ENCODE measurements at regions of chr6 and their contacts with region 1.

Region 1: GRCh38 chr6:3748208-3749066 is 3.1 kb downstream of the PXDC1 start:
- DNase-seq: peak; percentile 86
- H3K4me3 ChIP-seq: peak overlapping the region; percentile 69 to 70; a peak in 3 of 4 replicates
- H3K27ac ChIP-seq: peak overlapping the region in 1 of 2 experiments; percentile 89; a peak in 2 of 4 replicates
- H3K4me1 ChIP-seq: peaks cover 14 to 23% of the 10 kb centered on the region in 2 experiments; a peak in 3 of 4 replicates
- H3K27me3 ChIP-seq: no peaks in the 10 kb centered on the region
- CTCF ChIP-seq: peak; percentile 80
- EP300 ChIP-seq: no peak
- RAD21 ChIP-seq: peak; percentile 66

Region 2: DNA sequence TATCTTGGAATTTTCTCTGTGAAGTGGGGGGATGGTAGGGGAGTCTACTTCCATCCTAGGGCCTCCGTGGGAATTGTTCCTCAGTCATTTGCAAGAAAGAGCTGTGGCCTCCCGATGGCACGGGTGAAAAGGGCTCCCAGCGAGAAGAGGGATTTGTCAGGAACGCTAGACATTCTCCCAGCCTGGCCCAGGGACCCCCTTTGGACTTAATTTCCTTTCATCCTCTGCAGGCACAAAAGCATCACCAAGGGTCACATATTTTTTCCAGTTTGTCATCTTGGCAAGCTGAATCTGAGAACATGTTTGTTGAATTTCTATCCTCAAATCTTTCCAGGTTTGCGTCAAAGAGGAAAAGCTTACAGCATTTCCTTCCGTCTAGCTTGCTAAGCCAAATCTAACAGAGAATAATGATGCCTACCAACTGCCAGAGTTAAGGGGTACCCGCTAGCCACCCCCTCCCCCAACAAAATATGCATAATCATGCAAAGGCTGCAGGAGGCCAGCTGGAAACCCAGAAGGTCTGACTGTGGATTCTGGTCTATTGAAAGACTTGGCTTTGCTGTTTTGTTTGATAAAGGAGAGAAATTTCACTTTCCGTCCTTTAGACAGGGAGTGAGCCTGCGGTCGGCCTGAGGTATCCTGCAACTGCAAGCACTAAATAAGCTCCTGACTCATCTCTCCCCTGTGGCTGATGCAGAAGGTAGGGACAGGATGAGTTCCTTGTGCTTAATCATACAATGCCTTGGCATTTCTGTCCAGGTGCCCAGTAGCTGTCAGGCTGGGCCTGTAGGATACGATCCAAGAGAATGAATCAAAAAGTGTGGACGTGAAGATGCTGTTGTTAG is 466.6 kb before region 1 on chr6:
- CTCF ChIA-PET with region 1: interaction called, 11 read pairs
- POLR2A ChIA-PET with region 1: no interaction called
- DNase-seq: no peak
- H3K4me3 ChIP-seq: no peak overlapping the region
- H3K27ac ChIP-seq: no peak overlapping the region; a peak in 1 of 4 replicates
- H3K4me1 ChIP-seq: peaks cover 13 to 14% of the 10 kb centered on the region in 2 experiments; a peak in 2 of 4 replicates
- H3K27me3 ChIP-seq: no peaks in the 10 kb centered on the region
- CTCF ChIP-seq: no peak
- EP300 ChIP-seq: peak in 1 of 2 experiments; percentile 20; a peak in 1 of 4 replicates
- RAD21 ChIP-seq: no peak

Region 3: GRCh38 chr6:3813150-3813780 is 64.8 kb after region 1 on chr6:
- CTCF ChIA-PET with region 1: no interaction called
- POLR2A ChIA-PET with region 1: no interaction called
- DNase-seq: no peak
- H3K4me3 ChIP-seq: no peak overlapping the region
- H3K27ac ChIP-seq: peak overlapping the region in 1 of 2 experiments; percentile 33; a peak in 1 of 4 replicates
- H3K4me1 ChIP-seq: peaks cover 8 to 20% of the 10 kb centered on the region in 2 experiments; a peak in 3 of 4 replicates
- H3K27me3 ChIP-seq: no peaks in the 10 kb centered on the region
- CTCF ChIP-seq: no peak
- EP300 ChIP-seq: peak in 1 of 2 experiments; percentile 38; a peak in 1 of 4 replicates
- RAD21 ChIP-seq: no peak

Region 4: DNA sequence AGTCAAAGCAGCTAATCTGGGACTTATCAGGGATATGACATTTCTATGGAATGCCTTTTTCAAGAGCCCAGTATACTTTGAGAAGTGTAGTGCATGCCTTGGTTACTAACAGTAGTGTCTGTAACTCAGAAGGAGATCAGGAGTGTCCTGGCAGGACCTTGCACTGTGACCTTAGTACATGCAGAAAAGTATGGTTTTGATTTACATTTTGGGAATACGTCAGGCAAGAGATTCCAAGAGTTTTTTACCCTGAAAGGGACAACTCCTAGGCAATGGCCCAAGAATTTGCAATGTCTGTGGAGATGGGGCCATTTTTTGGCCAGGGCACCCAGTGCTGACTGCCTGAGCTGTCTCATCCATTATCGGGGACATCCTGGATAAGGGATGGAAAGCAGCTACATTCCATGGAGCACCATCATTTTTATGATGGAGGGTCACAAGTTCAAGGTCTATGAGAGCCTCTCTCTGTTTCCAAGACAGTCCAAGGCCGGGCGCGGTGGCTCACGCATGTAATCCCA is 180.9 kb after region 1 on chr6:
- CTCF ChIA-PET with region 1: interaction called, 20 read pairs
- POLR2A ChIA-PET with region 1: no interaction called
- DNase-seq: no peak
- H3K4me3 ChIP-seq: no peak overlapping the region
- H3K27ac ChIP-seq: peak overlapping the region; percentile 58 to 84; a peak in 3 of 4 replicates
- H3K4me1 ChIP-seq: peaks cover 2 to 14% of the 10 kb centered on the region in 2 experiments; a peak in 2 of 4 replicates
- H3K27me3 ChIP-seq: no peaks in the 10 kb centered on the region
- CTCF ChIP-seq: no peak
- EP300 ChIP-seq: peak in 1 of 2 experiments; percentile 87; a peak in 2 of 4 replicates
- RAD21 ChIP-seq: no peak

Region 5: DNA sequence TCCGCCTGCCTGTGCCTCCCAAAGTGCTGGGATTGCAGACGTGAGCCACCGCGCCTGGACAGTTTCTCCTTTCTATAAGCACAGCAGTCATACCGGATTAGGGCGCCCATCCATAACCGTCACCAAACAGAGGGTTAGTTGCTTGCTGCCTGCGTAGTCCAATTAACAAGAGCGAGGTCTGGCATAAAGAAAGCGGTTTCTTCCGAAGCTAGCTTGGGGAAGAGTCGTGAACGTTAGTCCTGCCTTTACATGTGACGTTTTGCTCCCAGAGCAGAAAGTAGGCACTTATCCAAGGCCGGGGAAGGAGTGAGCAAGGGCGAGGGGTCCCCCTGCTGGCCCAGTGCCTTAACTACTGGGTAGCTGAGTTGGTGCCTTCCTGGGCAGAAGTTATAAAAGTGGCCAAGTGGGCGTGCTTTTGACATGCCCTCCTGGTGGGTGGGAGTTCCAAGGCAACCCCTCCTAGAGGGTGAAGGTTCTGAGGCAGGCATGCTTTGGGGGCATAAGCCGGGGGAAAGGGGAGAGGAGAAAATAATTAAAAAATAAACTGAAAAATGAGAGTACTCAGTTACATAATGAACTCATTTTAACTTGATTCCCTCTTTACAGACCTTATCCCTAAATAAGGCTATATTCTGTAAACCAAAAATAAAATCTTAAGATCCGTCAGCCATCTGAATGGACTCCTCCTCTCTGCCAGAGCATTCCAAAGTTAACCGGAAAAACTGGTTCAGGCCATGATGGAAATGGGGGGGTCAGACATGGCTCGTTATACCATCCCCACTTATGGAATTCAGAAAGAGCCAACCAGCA is 242.5 kb after region 1 on chr6:
- CTCF ChIA-PET with region 1: interaction called, 53 read pairs
- POLR2A ChIA-PET with region 1: no interaction called
- DNase-seq: peak; percentile 82
- H3K4me3 ChIP-seq: peak overlapping the region in 1 of 2 experiments; percentile 2; a peak in 1 of 4 replicates
- H3K27ac ChIP-seq: peak overlapping the region in 1 of 2 experiments; percentile 14; a peak in 1 of 4 replicates
- H3K4me1 ChIP-seq: peaks cover 14% of the 10 kb centered on the region in 2 experiments; a peak in 2 of 4 replicates
- H3K27me3 ChIP-seq: no peaks in the 10 kb centered on the region
- CTCF ChIP-seq: peak; percentile 96
- EP300 ChIP-seq: no peak
- RAD21 ChIP-seq: peak; percentile 91

Region 6: GRCh38 chr6:4008324-4009047 is 260.0 kb after region 1 on chr6:
- CTCF ChIA-PET with region 1: interaction called, 14 read pairs
- POLR2A ChIA-PET with region 1: no interaction called
- DNase-seq: peak; percentile 49
- H3K4me3 ChIP-seq: no peak overlapping the region; a peak in 1 of 4 replicates
- H3K27ac ChIP-seq: peak overlapping the region in 1 of 2 experiments; percentile 9; a peak in 1 of 4 replicates
- H3K4me1 ChIP-seq: peaks cover 0 to 6% of the 10 kb centered on the region in 2 experiments; a peak in 2 of 4 replicates
- H3K27me3 ChIP-seq: no peaks in the 10 kb centered on the region
- CTCF ChIP-seq: peak; percentile 69
- EP300 ChIP-seq: no peak
- RAD21 ChIP-seq: peak; percentile 76